ENCODE measurements at regions of chr22 and their contacts with region 1.

Region 1: DNA sequence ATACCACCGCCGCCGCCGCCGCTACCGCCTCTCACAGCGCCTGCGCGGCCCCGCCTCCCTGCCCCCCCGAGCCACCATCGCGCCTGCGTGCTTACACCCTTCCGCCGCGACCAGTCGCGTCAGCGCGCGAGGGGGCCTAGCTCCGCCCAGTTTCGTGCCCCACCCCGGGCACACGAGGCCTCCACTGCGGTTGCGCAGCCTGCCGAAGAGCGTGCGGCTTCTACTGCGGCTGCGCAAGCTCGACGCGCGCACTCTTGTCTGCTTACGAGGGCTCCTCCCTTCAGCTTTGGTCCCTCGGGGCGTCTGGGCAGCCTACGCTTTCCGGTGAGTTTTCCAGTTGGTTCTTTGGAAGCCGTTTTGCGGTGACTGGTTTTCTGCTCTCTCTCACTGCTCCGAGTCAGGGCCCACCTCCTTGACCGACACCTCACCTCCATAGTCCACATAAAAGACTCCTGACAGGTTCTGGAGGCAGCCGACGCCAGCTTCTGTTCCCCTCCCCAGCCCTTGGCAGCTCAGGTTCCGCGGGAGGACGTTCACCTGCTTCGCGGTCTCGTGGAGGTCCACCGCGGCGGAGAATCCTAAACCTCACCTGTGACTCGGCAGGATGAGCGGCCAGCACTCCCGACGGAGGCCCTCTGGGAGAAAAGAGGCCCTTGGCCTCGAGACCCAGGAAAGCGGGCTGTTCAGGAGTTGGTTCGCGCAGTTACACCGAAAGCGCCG is at the start of gene PITPNB:
- DNase-seq: peak; percentile 93
- ATAC-seq: peak; percentile 92
- H3K4me3 ChIP-seq: peak within 1 kb of the TSS; percentile 77 to 92 (median 90)
- H3K27ac ChIP-seq: peak within 1 kb of the TSS; percentile 80
- H3K4me1 ChIP-seq: peaks cover 50% of the 10 kb centered on the region
- H3K27me3 ChIP-seq: no peaks in the 10 kb centered on the region; a peak in 1 of 5 replicates
- CTCF ChIP-seq: no peak
- EP300 ChIP-seq: no peak
- POLR2A ChIP-seq: peak; percentile 87 to 91
- RAD21 ChIP-seq: no peak
- total RNA-seq, gene PITPNB: 17.0 and 40.7 TPM in 2 replicates

Region 2: GRCh38 chr22:27842669-27843431 is 76.5 kb before region 1 on chr22:
- CTCF ChIA-PET with region 1: no interaction called
- POLR2A ChIA-PET with region 1: no interaction called
- in situ Hi-C with region 1: no loop called
- intact Hi-C with region 1: no loop called
- DNase-seq: no peak
- ATAC-seq: no peak
- H3K4me3 ChIP-seq: no peak overlapping the region
- H3K27ac ChIP-seq: no peak overlapping the region
- H3K4me1 ChIP-seq: no peaks in the 10 kb centered on the region
- H3K27me3 ChIP-seq: no peaks in the 10 kb centered on the region
- CTCF ChIP-seq: no peak
- EP300 ChIP-seq: no peak
- POLR2A ChIP-seq: no peak
- RAD21 ChIP-seq: no peak

Region 3: DNA sequence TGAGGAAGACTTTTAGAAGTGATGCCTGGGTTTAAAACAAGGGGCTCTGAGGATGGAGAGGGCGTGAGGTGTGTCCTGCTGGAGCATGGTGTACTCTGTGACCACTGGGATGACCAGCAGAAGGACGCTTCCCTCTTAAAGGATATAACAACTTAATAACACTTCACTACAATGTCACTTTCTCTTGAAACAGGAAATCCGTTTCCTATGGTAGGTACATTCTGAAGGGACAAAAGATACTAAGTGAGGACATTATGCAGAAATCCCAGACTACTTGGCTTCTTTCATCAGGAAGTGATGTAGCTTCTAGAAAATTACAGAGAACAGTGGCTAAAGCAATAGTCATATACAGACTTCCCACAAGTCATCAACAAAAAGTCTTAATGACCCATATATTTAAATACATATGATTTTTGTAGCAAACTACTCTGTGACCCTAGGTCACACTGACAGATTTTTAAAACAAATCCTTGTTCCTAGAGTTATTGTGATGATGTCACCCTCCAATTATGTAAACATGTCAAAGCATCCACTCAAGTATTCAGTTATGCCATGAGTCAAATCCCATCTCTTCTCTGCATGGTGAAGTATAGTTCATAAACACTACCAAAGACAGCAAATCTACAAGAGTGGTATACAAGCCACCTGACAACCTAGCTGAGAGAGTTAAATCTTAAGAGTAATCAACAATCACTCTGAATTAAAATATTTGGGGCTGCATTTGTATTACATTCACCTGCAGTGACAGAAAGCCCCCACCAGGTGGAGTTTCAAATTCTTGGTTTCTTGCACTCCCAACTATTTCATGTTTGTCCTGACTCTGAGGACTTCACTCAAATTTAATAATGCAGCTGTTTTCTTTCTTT is 33.2 kb before region 1 on chr22:
- CTCF ChIA-PET with region 1: no interaction called
- POLR2A ChIA-PET with region 1: interaction called, 4 read pairs
- in situ Hi-C with region 1: no loop called
- intact Hi-C with region 1: loop called (anchors 1 kb)
- DNase-seq: peak; percentile 35
- ATAC-seq: peak; percentile 41; the same call in 1 of the 3 replicates
- H3K4me3 ChIP-seq: no peak overlapping the region
- H3K27ac ChIP-seq: no peak overlapping the region
- H3K4me1 ChIP-seq: peaks cover 32% of the 10 kb centered on the region
- H3K27me3 ChIP-seq: no peaks in the 10 kb centered on the region
- CTCF ChIP-seq: peak; percentile 54
- EP300 ChIP-seq: no peak
- POLR2A ChIP-seq: no peak
- RAD21 ChIP-seq: no peak

Region 4: DNA sequence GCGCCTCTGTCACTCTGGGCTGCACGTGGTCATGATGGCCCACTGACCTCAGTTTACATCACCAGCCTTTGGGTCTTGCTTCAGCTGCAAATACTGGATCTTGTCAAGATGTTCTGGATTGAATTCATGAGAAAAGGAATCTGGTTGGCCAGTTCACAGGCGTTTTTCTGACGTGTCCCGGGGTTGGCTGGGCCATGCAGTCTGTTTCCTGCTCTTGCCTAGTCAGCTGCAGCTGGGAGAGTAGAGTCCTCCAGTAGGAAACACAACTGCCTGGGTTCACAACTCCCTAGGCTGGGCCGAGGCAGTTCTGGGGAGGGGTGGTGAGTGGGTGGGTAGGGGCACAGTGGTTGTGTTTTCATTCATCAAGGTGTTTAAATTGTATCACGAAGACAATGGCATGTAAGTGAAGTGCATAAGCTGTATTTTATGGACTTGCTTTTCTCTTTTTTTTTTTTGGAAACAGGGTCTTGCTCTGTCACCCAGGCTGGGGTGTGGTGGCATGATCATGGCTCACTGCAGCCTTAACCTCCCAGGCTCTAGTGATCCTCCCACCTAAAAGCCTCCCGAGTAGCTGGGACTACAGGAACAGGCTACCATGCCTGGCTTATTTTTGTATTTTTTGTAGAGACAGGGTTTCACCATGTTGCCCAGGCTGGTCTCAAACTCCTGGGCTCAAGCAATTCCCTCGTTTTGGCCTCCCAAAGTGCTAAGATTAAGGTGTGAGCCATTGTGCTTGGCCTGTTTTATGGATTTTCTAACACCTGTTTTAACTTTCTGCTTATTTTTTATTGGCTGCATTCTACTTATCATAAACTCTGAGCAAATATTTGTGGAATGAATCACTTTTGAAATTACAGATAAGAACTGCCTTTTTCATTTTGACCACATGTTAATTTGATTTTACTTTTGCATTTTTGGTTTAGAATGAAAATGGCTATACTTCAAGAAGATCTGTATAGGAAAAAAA is 53.6 kb after region 1 on chr22:
- CTCF ChIA-PET with region 1: no interaction called
- POLR2A ChIA-PET with region 1: no interaction called
- in situ Hi-C with region 1: no loop called
- intact Hi-C with region 1: loop called (anchors 10 kb)
- DNase-seq: no peak
- ATAC-seq: no peak
- H3K4me3 ChIP-seq: no peak overlapping the region
- H3K27ac ChIP-seq: no peak overlapping the region
- H3K4me1 ChIP-seq: no peaks in the 10 kb centered on the region
- H3K27me3 ChIP-seq: no peaks in the 10 kb centered on the region
- CTCF ChIP-seq: no peak
- EP300 ChIP-seq: no peak
- POLR2A ChIP-seq: no peak
- RAD21 ChIP-seq: no peak

Region 5: GRCh38 chr22:28009272-28009827 is 90.0 kb after region 1 on chr22:
- CTCF ChIA-PET with region 1: no interaction called
- POLR2A ChIA-PET with region 1: no interaction called
- in situ Hi-C with region 1: no loop called
- intact Hi-C with region 1: no loop called
- DNase-seq: peak; percentile 34
- ATAC-seq: peak; percentile 91
- H3K4me3 ChIP-seq: no peak overlapping the region
- H3K27ac ChIP-seq: no peak overlapping the region
- H3K4me1 ChIP-seq: no peaks in the 10 kb centered on the region
- H3K27me3 ChIP-seq: no peaks in the 10 kb centered on the region
- CTCF ChIP-seq: peak; percentile 96
- EP300 ChIP-seq: no peak
- POLR2A ChIP-seq: no peak
- RAD21 ChIP-seq: peak; percentile 83

Measured in HepG2 (cell line).